Head of caudate nucleus (tissue), 42 donors: ENCODE measurements at regions of chr15 and their contacts with region 1.

Region 1: GRCh38 chr15:101294731-101295606 is at the start of gene SNRPA1:
- DNase-seq: peak; percentile 82 to 98 (median 95)

Region 2: DNA sequence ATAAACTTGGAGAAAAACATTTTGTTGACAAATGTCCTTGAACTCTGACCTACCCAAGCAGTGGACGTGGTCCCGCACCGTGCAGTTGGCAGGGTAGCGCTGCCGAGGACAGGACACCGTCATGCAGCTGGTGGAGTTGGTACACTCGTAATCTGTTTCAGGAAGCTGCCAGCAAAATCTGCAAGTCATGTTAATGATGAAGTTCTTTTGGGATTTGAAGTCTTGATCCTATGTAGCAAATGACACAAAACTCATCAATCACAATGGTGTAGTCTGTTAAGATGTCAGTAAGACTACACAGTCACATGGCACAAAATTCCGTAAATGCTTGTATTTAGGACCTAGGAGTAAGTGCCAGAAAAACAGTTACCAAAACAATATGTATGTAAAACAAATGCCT is 351.7 kb after region 1 on chr15:
- intact Hi-C with region 1: loop called (anchors 2 kb)
- DNase-seq: peak in 1 of 42 donors; percentile 15